ENCODE measurements at regions of chr22 and their contacts with region 1.

Region 1: DNA sequence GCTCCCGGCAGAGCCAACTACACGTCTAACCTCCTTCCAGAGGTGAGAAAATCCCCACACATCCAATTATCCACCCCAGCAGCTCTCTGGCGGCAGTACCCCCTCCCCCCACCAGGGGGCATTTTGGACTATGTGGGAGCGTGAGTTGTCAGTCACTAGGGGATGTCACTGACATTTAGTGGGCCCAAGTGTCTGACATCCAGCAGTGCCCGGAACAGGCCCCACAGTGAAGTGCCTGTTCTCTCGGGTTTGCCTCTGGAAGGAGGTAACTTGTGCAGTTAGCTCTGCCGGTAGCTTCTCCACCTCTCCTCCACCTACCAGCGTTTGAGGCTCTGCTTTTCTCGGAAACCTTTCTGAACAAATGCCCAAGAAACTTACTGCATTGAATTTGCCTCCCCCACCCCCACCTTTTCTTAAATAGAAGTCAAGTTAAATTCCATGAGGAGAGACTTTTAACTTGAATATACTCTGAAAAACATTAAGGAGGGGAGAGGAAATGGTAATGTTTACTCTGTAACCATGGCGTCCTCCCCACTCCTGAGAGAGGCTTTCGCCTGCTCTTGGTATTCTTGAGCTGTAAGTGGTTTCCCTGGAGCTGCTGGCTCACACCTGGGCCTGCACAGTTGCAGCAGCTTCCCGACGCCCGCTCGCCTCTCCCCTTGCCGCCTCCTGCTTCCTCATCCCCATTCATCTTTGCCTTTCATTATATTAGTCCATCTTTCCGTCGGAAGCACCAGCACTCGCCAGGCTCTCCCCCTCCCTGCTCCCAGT is 112.8 kb downstream of the WNT7B start:
- DNase-seq: peak; percentile 44
- H3K27ac ChIP-seq: peak overlapping the region; percentile 48
- CTCF ChIP-seq: peak; percentile 90

Region 2: DNA sequence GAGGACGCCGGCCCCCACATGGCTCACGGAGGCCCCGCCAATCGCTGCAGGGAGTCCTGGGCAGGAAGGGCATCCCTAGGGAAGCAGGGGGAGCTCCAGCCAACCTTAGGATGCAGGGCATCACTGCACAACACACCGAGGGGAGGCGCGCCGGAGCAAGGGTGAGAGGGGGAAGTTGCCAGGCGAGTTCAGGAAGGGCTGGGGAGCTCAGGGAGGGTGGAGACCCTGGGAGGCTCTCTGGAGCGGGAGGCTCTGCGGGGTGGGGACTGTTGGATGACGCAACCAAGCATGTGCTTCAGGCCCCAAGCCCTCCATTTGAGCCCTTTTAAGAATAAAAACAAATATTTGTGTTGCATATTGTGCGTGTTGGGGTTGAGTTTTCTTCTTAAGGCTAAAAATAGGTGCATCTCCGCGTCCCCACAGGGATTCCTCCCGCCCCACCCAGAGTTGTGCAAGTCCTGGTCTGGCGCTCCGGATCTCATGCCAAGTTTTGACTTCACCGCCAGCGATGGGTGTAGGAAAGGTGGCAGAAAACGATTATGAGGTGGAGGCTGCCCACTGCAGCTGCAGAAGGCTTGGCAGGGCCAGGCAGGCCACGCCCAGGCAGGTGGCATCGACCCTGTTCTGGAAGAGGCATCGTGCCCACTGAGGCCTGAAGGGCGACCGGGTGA is 47.6 kb after region 1 on chr22:
- CTCF ChIA-PET with region 1: interaction called, 13 read pairs
- POLR2A ChIA-PET with region 1: no interaction called
- DNase-seq: peak; percentile 77
- H3K27ac ChIP-seq: peak overlapping the region; percentile 89
- CTCF ChIP-seq: peak; percentile 36; the same call in 1 of the 2 replicates